ENCODE measurements at regions of chr17 and their contacts with region 1.

Region 1: DNA sequence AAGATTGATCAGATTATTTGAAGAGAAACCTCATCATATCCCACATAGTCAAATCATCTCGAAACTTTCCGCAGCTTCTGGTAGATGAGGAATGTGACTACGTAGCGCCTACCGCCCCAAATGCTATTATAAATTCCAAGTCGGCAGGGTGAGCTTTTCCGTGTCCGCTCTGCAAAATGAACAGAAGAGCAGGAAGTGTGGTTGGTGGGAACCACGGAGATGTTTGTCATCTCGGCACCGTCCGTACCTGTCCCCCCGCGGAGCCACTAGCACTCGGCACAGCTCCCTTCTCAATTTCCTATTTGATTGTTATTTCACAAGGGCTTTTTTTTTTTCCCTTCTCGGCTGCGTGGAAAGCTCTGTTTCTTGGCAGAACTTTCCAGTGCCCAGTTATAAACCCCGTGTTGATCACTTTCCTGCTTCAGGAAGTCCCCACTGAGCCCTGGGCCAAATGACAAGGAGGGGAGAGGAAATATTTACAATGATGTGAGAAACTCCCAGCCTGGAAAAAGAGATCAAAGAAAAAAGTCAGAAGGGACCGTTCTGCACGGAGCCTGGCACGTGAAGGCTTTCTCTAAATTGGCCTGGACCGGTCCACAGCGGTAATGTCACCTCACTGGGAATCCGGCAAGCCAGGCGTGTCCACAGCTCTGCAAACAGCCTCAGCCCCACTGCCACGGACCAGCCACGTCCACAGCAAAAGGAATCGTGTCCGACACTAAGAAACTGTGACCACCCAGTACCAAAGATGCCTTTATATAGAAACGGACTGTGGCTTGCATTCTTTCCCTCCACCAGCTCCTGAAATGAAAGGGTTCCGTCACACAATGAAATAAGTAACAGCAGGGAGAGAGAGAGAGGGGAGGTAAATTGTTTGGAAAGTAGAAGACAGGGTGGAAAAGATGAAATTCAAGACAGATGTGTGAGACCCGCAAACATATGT is 65.0 kb downstream of the MRM3 start:
- DNase-seq: peak in 1 of 2 donors; percentile 29
- ATAC-seq: peak; percentile 4 to 33 (median 17)
- H3K4me3 ChIP-seq: peak overlapping the region; percentile 7 to 50 (median 41)
- H3K27ac ChIP-seq: peak overlapping the region; percentile 13 to 83 (median 73)
- H3K4me1 ChIP-seq: peaks cover 8 to 62% (median 30%) of the 10 kb centered on the region in 9 donors
- H3K27me3 ChIP-seq: peaks cover 0 to 28% (median 0%) of the 10 kb centered on the region in 7 donors
- CTCF ChIP-seq: no peak

Region 2: GRCh38 chr17:721539-721934 is 125.6 kb before region 1 on chr17:
- intact Hi-C with region 1: no loop called
- DNase-seq: no peak
- ATAC-seq: no peak
- H3K4me3 ChIP-seq: no peak overlapping the region
- H3K27ac ChIP-seq: no peak overlapping the region
- H3K4me1 ChIP-seq: peaks cover 0 to 6% (median 0%) of the 10 kb centered on the region in 9 donors
- H3K27me3 ChIP-seq: no peaks in the 10 kb centered on the region
- CTCF ChIP-seq: no peak

Region 3: GRCh38 chr17:794876-795275 is 52.3 kb before region 1 on chr17:
- intact Hi-C with region 1: loop called in 4 of 10 experiments (anchors 5 to 10 kb)
- DNase-seq: peak; percentile 88 to 89
- ATAC-seq: peak; percentile 40 to 90 (median 78)
- H3K4me3 ChIP-seq: peak overlapping the region in 9 of 10 donors; percentile 27 to 53 (median 43)
- H3K27ac ChIP-seq: peak overlapping the region in 9 of 10 donors; percentile 25 to 71 (median 55)
- H3K4me1 ChIP-seq: peaks cover 0 to 36% (median 15%) of the 10 kb centered on the region in 9 donors
- H3K27me3 ChIP-seq: no peaks in the 10 kb centered on the region
- CTCF ChIP-seq: peak; percentile 85 to 97 (median 86)

Region 4: DNA sequence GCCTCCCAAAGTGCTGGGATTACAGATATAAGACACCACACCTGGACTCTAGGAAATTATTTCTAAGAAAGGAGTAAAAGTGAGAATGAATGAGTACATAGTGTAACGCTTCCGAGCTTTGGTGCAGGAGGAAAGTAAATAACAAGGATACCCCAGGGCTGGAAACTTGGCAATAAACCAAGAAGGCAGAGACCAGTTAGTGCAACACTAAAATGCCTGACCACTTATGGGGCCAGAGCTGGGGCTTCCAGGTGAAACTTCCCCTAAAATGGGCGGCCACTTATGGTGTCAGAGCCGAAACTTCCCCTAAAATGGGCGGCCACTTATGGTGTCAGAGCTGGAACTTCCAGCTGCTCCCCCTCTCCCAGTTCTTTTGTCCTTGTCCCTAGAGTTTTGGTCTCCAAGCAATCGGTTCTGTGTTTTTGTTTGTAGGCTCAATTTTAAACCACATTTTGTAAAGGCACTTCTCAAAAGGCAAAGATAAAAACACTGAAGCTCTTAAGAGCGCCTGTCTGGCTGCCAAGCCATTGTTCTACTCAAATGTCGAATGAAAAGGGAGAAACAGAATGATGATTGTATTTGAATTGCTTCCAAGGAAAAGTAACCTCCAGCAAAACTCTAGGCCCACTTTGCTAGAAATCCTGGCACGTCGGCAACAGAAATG is 68.5 kb after region 1 on chr17:
- intact Hi-C with region 1: loop called in 2 of 10 experiments (anchors 5 to 10 kb)
- DNase-seq: peak; percentile 30 to 75
- ATAC-seq: peak; percentile 66 to 88 (median 82)
- H3K4me3 ChIP-seq: peak overlapping the region in 4 of 10 donors; percentile 20 to 32 (median 27)
- H3K27ac ChIP-seq: peak overlapping the region; percentile 39 to 89 (median 80)
- H3K4me1 ChIP-seq: peaks cover 2 to 50% (median 24%) of the 10 kb centered on the region in 9 donors
- H3K27me3 ChIP-seq: no peaks in the 10 kb centered on the region
- CTCF ChIP-seq: no peak

Measured in heart right ventricle (tissue), 16 donors.